ENCODE measurements at regions of chr3 and their contacts with region 1.

Region 1: GRCh38 chr3:184371570-184372018 is 6.4 kb downstream of the THPO start:
- DNase-seq: peak; percentile 85
- H3K4me3 ChIP-seq: no peak overlapping the region; a peak in 1 of 4 replicates
- H3K27ac ChIP-seq: no peak overlapping the region
- H3K4me1 ChIP-seq: peaks cover 0 to 26% of the 10 kb centered on the region in 2 experiments; a peak in 3 of 4 replicates
- H3K27me3 ChIP-seq: no peaks in the 10 kb centered on the region
- CTCF ChIP-seq: peak; percentile 92
- EP300 ChIP-seq: no peak
- RAD21 ChIP-seq: peak; percentile 97

Region 2: DNA sequence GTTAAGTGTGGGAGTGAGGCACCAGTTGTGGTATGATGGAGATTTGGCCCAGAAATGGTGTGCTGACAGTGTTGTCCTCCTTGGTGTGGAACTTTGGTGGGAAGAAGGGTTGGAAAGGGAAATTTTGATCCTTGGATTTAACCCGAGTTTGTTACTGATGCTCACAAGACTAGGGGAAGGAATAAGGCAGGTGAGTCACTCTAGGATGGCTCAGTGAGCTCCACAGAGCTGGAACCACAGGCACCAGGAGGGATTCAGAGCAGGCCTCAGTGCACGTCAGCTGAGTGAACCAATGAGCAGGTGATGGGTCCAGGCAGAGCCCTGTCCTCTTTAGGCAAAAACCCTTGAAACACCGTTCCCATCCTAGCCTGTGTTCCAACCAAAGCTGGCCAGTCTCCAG is 19.7 kb after region 1 on chr3:
- CTCF ChIA-PET with region 1: interaction called, 21 read pairs
- POLR2A ChIA-PET with region 1: no interaction called
- DNase-seq: no peak
- H3K4me3 ChIP-seq: no peak overlapping the region
- H3K27ac ChIP-seq: no peak overlapping the region
- H3K4me1 ChIP-seq: no peaks in the 10 kb centered on the region
- H3K27me3 ChIP-seq: no peaks in the 10 kb centered on the region
- CTCF ChIP-seq: no peak
- EP300 ChIP-seq: no peak
- RAD21 ChIP-seq: no peak

Region 3: DNA sequence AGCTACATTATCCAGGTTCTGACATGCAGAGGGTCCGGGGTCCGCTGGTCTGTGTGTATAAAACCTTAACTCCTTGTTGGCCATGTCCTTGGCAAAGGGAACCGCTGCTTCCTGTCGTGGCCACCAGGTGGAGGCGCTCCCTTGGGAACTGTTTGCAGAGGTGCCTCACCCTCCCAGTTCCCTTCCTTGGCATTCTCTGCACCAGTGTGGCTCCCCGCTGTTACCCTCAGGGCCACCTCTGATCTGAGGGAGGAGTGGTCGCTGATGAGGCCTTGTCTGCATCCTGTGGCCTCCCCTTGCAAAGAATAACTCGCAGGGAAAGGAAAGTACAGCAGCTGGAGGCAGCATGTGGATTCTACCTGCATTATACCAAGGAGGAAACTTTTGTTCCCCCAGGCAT is 97.8 kb after region 1 on chr3:
- CTCF ChIA-PET with region 1: interaction called, 45 read pairs
- POLR2A ChIA-PET with region 1: no interaction called
- DNase-seq: peak; percentile 64
- H3K4me3 ChIP-seq: no peak overlapping the region
- H3K27ac ChIP-seq: no peak overlapping the region
- H3K4me1 ChIP-seq: peaks cover 0 to 7% of the 10 kb centered on the region in 2 experiments; a peak in 1 of 4 replicates
- H3K27me3 ChIP-seq: peaks cover 26% of the 10 kb centered on the region; the same call in 1 of the 2 replicates
- CTCF ChIP-seq: peak; percentile 68
- EP300 ChIP-seq: no peak
- RAD21 ChIP-seq: peak; percentile 73

Region 4: GRCh38 chr3:184505076-184505878 is 133.7 kb after region 1 on chr3:
- CTCF ChIA-PET with region 1: interaction called, 142 read pairs
- POLR2A ChIA-PET with region 1: no interaction called
- DNase-seq: no peak
- H3K4me3 ChIP-seq: no peak overlapping the region
- H3K27ac ChIP-seq: no peak overlapping the region
- H3K4me1 ChIP-seq: no peaks in the 10 kb centered on the region
- H3K27me3 ChIP-seq: peaks cover 11% of the 10 kb centered on the region; the same call in 1 of the 2 replicates
- CTCF ChIP-seq: no peak
- EP300 ChIP-seq: no peak; a peak in 1 of 4 replicates
- RAD21 ChIP-seq: no peak

Region 5: DNA sequence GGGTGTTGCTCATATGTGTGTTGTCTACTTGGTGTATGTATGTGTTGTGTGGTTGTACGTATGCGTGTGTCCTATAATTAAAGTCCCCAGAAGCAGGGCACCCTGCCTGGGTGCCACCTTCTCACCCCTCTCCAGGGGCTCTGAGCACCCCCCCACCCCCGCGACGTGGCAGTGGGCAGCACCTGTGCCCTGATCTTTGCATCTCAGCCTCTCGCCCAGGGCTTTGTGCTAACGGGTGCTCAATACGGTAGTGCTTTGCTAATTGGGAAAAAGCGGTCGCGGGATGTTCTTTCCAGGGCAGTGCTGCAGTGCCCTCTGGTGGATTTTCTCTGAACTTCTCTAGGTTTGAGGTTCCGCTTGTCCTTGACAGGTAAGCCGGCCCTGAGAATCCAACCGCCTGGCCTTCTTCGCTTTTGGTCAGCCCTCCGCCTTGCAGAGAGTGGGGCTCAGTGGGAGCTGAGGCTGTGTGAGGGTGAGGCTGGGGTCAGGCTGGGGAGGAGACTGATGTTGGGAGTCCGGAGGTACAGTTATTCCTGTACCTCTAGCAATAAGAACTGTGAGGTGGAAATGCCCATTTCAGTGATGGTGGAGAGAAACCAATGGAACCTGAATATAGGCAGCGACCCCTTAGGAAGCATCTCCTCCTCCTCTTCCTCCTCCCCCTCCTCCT is 172.4 kb after region 1 on chr3:
- CTCF ChIA-PET with region 1: interaction called, 165 read pairs
- POLR2A ChIA-PET with region 1: interaction called, 3 read pairs
- DNase-seq: peak; percentile 83
- H3K4me3 ChIP-seq: peak overlapping the region in 1 of 2 experiments; percentile 50; a peak in 1 of 4 replicates
- H3K27ac ChIP-seq: no peak overlapping the region
- H3K4me1 ChIP-seq: peaks cover 0 to 4% of the 10 kb centered on the region in 2 experiments; a peak in 1 of 4 replicates
- H3K27me3 ChIP-seq: peaks cover 24% of the 10 kb centered on the region
- CTCF ChIP-seq: peak; percentile 87
- EP300 ChIP-seq: no peak
- RAD21 ChIP-seq: peak; percentile 94

Measured in SK-N-SH (cell line).